ENCODE measurements at regions of chr16 and their contacts with region 1.

Region 1: DNA sequence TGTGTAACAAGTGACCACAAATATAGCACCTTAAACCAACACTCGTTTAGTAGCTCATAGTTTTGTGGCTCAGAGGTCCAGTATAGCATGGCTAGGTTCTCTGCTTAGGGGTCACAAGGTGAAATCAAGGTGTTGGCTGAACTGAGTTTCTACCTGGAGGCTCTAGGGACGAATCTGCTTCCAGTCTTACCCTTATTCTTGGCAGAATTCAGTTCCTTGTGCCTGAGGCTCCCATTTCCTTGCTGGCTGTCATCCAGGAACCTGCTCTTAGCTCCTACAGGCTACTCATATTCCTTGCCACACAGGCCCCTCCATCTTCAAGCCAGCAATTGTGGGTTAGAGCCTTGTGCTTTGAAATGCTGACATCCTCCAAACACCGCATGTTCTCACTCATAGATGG is 212.3 kb upstream of the CDH13 start:
- DNase-seq: no peak
- H3K4me3 ChIP-seq: no peak overlapping the region
- H3K27ac ChIP-seq: no peak overlapping the region
- H3K4me1 ChIP-seq: no peaks in the 10 kb centered on the region
- H3K27me3 ChIP-seq: no peaks in the 10 kb centered on the region
- CTCF ChIP-seq: no peak
- EP300 ChIP-seq: no peak
- POLR2A ChIP-seq: no peak

Region 2: DNA sequence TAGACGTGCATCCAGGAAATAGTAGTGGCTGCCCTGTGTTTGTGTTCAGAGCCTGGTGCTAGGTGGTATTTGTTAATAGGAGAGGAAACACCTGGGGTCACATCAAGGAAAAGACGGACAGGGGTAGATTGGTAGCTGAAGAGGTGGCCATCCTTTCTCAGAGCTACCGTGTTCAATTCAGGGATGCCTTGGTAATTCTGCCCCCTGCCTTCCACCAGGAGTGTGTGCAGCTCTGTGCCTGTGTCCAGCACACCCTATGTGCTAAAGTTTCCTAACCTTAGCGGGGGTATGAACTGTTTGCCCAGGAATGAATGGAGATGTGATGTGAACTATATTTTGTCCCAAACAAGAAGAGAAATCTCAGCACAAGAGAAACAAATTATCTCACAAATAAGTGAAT is 70.3 kb before region 1 on chr16:
- in situ Hi-C with region 1: no loop called
- intact Hi-C with region 1: no loop called
- DNase-seq: no peak
- H3K4me3 ChIP-seq: no peak overlapping the region
- H3K27ac ChIP-seq: no peak overlapping the region
- H3K4me1 ChIP-seq: no peaks in the 10 kb centered on the region
- H3K27me3 ChIP-seq: no peaks in the 10 kb centered on the region
- CTCF ChIP-seq: peak in 1 of 5 experiments; percentile 15
- EP300 ChIP-seq: no peak
- POLR2A ChIP-seq: no peak

Region 3: DNA sequence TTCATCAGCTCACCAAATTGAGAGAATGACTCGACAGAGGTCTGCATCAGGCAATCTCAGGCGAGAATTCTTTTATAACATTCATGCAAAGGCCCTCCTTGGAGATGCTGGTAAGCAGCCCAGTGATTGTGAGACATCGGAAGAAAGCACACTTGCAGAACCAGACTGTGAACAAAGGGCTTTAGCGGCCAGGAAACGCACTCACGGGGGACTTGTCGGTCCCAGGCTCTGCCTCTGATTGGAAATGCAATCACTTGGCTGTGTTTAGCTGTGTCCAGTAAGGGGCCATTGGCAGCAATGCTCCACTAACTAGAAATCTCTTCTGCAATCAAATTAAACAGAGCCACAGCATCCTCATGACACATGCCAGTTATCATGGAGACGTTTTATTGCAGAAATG is 14.4 kb before region 1 on chr16:
- in situ Hi-C with region 1: no loop called
- intact Hi-C with region 1: loop called (anchors 1 kb)
- DNase-seq: no peak
- H3K4me3 ChIP-seq: no peak overlapping the region
- H3K27ac ChIP-seq: no peak overlapping the region
- H3K4me1 ChIP-seq: no peaks in the 10 kb centered on the region
- H3K27me3 ChIP-seq: no peaks in the 10 kb centered on the region
- CTCF ChIP-seq: no peak
- EP300 ChIP-seq: no peak
- POLR2A ChIP-seq: no peak

Measured in transverse colon (tissue), 4 donors.